BJ (cell line): ENCODE measurements at regions of chr11 and their contacts with region 1.

Region 1: GRCh38 chr11:8959546-8960166 is 4.6 kb downstream of the TMEM9B start:
- DNase-seq: peak; percentile 22
- H3K4me3 ChIP-seq: no peak overlapping the region
- H3K27me3 ChIP-seq: no peaks in the 10 kb centered on the region
- CTCF ChIP-seq: peak; percentile 66

Region 2: GRCh38 chr11:8709002-8709672 is 250.5 kb before region 1 on chr11:
- CTCF ChIA-PET with region 1: interaction called, 5 read pairs
- POLR2A ChIA-PET with region 1: interaction called, 12 read pairs
- DNase-seq: peak; percentile 96
- H3K4me3 ChIP-seq: no peak overlapping the region
- H3K27me3 ChIP-seq: no peaks in the 10 kb centered on the region
- CTCF ChIP-seq: no peak

Region 3: GRCh38 chr11:8917157-8917825 is 42.4 kb before region 1 on chr11:
- CTCF ChIA-PET with region 1: interaction called, 49 read pairs
- POLR2A ChIA-PET with region 1: no interaction called
- DNase-seq: peak; percentile 69
- H3K4me3 ChIP-seq: no peak overlapping the region
- H3K27me3 ChIP-seq: no peaks in the 10 kb centered on the region
- CTCF ChIP-seq: no peak

Region 4: DNA sequence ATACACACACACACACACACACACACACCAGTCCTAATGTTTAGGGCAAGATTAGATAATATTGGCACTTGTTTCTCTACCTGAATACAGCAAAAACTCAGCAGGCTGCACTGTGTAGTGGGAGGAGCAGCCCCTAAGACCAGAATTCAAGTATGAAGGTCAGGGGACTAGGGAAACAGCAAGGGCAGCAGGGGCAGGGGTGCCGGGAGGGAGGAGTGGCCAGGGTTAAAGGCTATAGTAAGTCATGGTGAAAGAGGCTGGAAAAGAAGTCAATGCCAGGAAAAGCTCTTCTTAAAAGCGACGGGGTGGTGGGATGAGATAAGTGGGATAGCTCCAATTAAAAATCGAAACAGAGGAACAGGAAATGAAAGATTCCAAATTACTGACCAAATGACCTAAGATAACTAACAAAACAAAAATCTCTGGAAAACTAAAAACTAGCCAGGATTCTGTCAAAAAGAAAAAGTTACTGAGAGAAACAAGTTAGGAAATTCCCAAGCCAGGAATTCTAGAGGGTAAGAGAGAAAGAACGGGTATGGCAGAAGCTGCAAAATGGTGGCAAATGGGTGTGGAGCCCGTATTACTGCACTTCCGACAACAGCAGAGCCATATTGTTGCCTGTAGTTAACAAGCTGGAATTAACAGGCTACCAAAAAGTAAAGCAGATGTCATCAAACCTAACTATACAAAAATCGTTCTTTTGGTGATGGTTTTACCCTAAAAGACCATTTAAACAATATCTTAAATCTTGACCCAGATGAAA is 18.1 kb before region 1 on chr11:
- CTCF ChIA-PET with region 1: interaction called, 12 read pairs
- POLR2A ChIA-PET with region 1: no interaction called
- DNase-seq: no peak
- H3K4me3 ChIP-seq: no peak overlapping the region
- H3K27me3 ChIP-seq: no peaks in the 10 kb centered on the region
- CTCF ChIP-seq: no peak

Region 5: GRCh38 chr11:9091044-9091936 is 131.6 kb after region 1 on chr11 and contains the start of gene SCUBE2:
- CTCF ChIA-PET with region 1: no interaction called
- POLR2A ChIA-PET with region 1: no interaction called
- DNase-seq: no peak
- H3K4me3 ChIP-seq: peak within 1 kb of the TSS; percentile 37
- H3K27me3 ChIP-seq: peaks cover 3% of the 10 kb centered on the region; the same call in 1 of the 2 replicates
- CTCF ChIP-seq: no peak
- polyA plus RNA-seq, gene SCUBE2: 1.4 and 2.0 TPM in 2 replicates